HEK293T (cell line): ENCODE measurements at regions of chr15 and their contacts with region 1.

Region 1: GRCh38 chr15:63048115-63048775 is 5.7 kb downstream of the TPM1 start:
- DNase-seq: peak; percentile 77

Region 2: GRCh38 chr15:63065262-63066221 is 17.3 kb after region 1 on chr15:
- CTCF ChIA-PET with region 1: no interaction called
- POLR2A ChIA-PET with region 1: no interaction called
- DNase-seq: no peak

Region 3: GRCh38 chr15:63086271-63086670 is 38.0 kb after region 1 on chr15:
- CTCF ChIA-PET with region 1: interaction called, 11 read pairs
- POLR2A ChIA-PET with region 1: no interaction called
- DNase-seq: no peak

Region 4: GRCh38 chr15:63093486-63094205 is 45.4 kb after region 1 on chr15:
- CTCF ChIA-PET with region 1: interaction called, 18 read pairs
- POLR2A ChIA-PET with region 1: no interaction called
- DNase-seq: peak; percentile 68